ENCODE measurements at regions of chr2 and their contacts with region 1.

Region 1: DNA sequence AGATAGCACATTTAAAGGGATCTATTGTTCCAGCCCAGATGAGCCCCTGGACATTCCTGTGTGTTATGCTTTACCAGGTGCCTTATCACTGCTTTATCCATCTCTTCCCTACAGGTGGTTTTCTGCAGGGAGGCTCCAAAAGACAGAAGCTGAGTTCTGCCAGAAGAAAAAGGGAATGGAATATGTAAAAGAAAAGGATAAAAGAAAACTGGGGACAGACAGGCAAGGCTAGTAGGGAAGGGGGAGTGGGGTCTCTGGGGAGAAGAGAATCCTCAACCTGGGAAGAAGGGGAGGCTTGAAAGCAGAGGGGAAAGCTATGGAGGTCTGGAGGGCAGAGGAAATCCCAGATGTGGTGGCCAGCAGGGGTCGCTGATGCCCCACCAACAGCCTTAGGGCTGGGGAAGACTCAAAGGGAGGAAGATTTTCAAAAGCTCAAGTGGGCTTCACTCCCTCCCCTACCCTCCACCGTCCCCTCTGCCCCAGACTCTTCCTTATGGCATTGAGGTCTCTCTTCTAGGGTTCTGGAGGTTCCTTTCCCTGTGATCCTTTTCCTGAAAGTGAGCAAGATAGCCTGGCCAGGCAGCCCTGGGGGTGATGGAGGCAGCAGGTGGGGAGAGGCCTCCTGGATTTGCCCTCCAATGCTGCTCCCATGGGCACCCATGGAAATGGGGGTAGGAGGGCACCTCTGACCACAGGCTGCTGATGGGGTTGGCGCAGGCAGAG is 178.1 kb upstream of the PKDCC start:
- DNase-seq: peak; percentile 79
- ATAC-seq: peak; percentile 88 to 90

Region 2: DNA sequence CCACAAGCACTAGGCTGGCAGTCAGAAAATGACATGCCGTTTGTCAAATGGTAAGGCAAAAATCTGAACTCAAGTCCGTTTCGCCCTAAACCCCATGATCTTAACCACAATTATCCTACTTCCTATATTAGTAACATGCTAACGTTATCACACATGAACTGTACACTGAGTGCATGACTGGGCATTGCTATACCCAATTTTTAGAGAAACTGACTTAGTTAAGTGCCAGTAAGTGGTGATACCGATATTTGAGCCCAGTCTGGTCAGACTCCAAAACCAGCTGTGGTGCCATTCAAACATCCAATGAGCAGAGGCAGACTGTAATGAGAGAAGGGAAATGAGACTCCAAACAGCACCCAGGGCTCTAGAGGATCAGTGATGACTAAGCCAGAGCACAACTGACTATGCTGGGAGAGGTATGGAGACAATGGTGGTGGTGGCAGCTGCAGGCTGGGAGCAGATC is 133.6 kb before region 1 on chr2:
- intact Hi-C with region 1: no loop called
- DNase-seq: no peak
- ATAC-seq: peak in 1 of 2 donors; percentile 42

Region 3: GRCh38 chr2:41829011-41829500 is 40.6 kb before region 1 on chr2:
- intact Hi-C with region 1: no loop called
- DNase-seq: no peak
- ATAC-seq: no peak

Region 4: GRCh38 chr2:42086500-42086953 is 216.8 kb after region 1 on chr2:
- intact Hi-C with region 1: loop called (anchors 2 to 5 kb)
- DNase-seq: no peak
- ATAC-seq: peak; percentile 50 to 62

Measured in left cardiac atrium (tissue), 4 donors.